HAP-1 (cell line): ENCODE measurements at regions of chrX and their contacts with region 1.

Region 1: GRCh38 chrX:2608638-2609430 is 82.3 kb upstream of the CD99 start:
- DNase-seq: peak; percentile 79 to 94
- H3K4me3 ChIP-seq: peak overlapping the region; percentile 79
- H3K4me1 ChIP-seq: peaks cover 14% of the 10 kb centered on the region
- H3K27me3 ChIP-seq: no peaks in the 10 kb centered on the region

Region 2: GRCh38 chrX:1657367-1658070 is 951.3 kb before region 1 on chrX:
- in situ Hi-C with region 1: loop called (anchors 10 kb)
- DNase-seq: peak in 1 of 2 experiments; percentile 28
- H3K4me3 ChIP-seq: no peak overlapping the region
- H3K4me1 ChIP-seq: peaks cover 3% of the 10 kb centered on the region; the same call in 1 of the 2 replicates
- H3K27me3 ChIP-seq: no peaks in the 10 kb centered on the region

Region 3: GRCh38 chrX:2707334-2707760 is 98.5 kb after region 1 on chrX:
- in situ Hi-C with region 1: no loop called
- DNase-seq: no peak
- H3K4me3 ChIP-seq: no peak overlapping the region
- H3K4me1 ChIP-seq: peaks cover 49% of the 10 kb centered on the region
- H3K27me3 ChIP-seq: no peaks in the 10 kb centered on the region